MCF 10A (cell line): ENCODE measurements at regions of chr3 and their contacts with region 1.

Region 1: DNA sequence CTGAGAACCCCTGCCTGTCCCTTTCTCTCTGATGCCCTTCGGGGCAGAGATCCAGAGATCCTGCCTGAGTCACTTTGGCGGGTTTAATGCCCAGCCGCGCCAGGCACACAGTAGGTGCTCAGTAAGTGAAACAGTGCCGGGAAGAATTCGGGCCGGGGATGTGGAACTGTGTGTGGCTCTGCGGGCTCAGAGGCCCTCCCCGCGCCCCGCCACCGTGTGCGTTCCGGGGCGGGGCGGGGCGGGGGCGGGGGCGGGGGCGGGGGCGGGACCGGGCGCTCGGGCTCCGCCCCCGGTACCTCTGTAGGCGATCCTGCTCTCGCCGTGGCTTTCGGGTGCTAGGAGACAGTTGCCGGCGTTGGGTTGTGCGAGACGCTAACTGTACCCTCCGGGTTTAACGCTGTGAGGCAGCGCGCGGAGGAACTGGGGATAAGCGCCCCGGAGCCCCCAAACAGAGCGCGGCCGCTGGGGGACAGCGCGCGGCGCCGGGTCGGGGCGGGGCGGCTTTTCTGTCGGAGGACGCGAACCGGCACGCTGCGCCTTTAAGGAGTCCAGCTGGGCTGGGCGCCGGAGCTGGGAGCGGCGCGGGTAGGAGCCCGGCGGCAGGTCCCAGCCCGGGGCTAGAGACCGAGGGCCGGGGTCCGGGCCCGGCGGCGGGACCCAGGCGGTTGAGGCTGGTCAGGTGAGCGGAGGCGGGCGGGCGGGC is at the start of gene ABHD6:
- DNase-seq: peak; percentile 69
- H3K4me3 Mint-ChIP-seq: peak within 1 kb of the TSS; percentile 87
- H3K27ac Mint-ChIP-seq: peak within 1 kb of the TSS; percentile 75
- H3K4me1 Mint-ChIP-seq: peaks cover 23% of the 10 kb centered on the region
- H3K27me3 Mint-ChIP-seq: peaks cover 6% of the 10 kb centered on the region
- CTCF ChIP-seq: peak; percentile 18
- total RNA-seq, gene ABHD6: 3.4 and 3.9 TPM in 2 replicates

Region 2: DNA sequence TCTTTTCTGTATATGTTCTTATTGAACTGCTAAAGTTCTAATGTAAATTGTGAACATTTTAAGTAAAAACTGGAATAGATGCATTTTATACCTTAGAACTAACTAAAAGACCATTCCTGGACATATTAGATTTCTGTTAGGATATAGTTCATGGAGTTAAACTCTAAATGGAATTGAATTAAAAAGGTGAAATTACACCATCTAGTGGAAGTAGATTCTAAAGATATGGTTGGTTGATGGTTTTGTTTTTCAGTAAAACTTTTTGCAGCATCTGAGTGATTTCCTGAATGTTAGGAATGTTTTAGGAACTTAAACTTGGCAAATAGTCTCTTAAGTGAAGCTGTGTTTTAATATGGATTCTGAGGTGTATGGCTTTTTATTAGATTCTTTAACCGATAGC is 384.5 kb before region 1 on chr3:
- CTCF ChIA-PET with region 1: no interaction called
- POLR2A ChIA-PET with region 1: no interaction called
- intact Hi-C with region 1: no loop called
- DNase-seq: peak; percentile 25
- H3K4me3 Mint-ChIP-seq: no peak overlapping the region
- H3K27ac Mint-ChIP-seq: no peak overlapping the region
- H3K4me1 Mint-ChIP-seq: peaks cover 6% of the 10 kb centered on the region
- H3K27me3 Mint-ChIP-seq: no peaks in the 10 kb centered on the region
- CTCF ChIP-seq: peak; percentile 24

Region 3: GRCh38 chr3:58188173-58188564 is 49.2 kb before region 1 on chr3:
- CTCF ChIA-PET with region 1: interaction called, 16 read pairs
- POLR2A ChIA-PET with region 1: interaction called, 5 read pairs
- intact Hi-C with region 1: no loop called
- DNase-seq: peak; percentile 86
- H3K4me3 Mint-ChIP-seq: no peak overlapping the region
- H3K27ac Mint-ChIP-seq: no peak overlapping the region
- H3K4me1 Mint-ChIP-seq: peaks cover 9% of the 10 kb centered on the region
- H3K27me3 Mint-ChIP-seq: no peaks in the 10 kb centered on the region
- CTCF ChIP-seq: no peak

Region 4: GRCh38 chr3:58271901-58272501 is 34.6 kb after region 1 on chr3:
- CTCF ChIA-PET with region 1: no interaction called
- POLR2A ChIA-PET with region 1: no interaction called
- intact Hi-C with region 1: loop called (anchors 1 kb)
- DNase-seq: peak; percentile 80
- H3K4me3 Mint-ChIP-seq: no peak overlapping the region
- H3K27ac Mint-ChIP-seq: peak overlapping the region; percentile 58
- H3K4me1 Mint-ChIP-seq: peaks cover 14% of the 10 kb centered on the region
- H3K27me3 Mint-ChIP-seq: no peaks in the 10 kb centered on the region
- CTCF ChIP-seq: no peak